BJ (cell line): ENCODE measurements at regions of chr6 and their contacts with region 1.

Region 1: DNA sequence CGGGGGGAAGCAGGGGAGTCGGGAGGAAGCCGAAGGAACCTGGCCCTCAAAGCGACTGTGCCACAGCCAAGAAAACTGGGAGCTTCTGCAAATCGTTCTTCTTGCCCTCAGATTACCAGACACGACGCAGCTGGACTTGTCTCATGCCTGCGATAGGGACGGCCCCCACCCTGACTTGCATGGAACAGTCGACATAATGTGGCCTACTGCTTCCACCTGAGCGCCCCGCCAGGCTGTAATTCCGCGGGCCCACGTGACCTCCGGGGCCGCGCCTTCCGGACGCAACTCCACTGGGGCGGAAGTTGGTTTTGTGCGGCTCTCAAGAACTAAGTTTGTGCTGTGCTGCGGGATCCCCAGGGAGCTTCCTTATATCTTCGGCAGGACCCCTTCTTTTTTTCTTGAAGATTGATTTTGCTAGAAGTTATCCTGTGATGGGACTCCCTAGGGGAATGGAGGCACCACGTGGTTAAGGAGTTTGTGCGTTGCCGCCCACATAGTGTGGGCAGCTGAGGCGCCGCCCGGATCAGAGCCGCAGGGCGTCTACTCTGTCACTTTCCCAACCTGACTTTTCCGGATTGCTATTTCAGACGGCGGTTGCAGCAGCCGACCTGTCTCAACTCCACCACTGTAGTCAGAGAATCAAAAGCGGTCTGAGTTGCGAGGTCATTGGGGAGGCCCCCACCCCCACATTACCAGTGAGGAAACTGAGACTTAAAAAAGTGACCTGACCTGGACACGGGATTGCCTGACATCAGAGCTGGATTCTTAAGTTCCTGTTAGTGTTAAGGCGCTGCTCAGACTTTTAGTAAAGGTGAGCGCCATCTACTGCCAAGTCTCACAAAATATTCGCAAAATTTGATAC is 540 bp upstream of the CD164 start:
- DNase-seq: peak; percentile 65
- H3K4me3 ChIP-seq: peak overlapping the region; percentile 99
- H3K27me3 ChIP-seq: no peaks in the 10 kb centered on the region; the same call in 1 of the 2 replicates
- CTCF ChIP-seq: peak; percentile 62

Region 2: DNA sequence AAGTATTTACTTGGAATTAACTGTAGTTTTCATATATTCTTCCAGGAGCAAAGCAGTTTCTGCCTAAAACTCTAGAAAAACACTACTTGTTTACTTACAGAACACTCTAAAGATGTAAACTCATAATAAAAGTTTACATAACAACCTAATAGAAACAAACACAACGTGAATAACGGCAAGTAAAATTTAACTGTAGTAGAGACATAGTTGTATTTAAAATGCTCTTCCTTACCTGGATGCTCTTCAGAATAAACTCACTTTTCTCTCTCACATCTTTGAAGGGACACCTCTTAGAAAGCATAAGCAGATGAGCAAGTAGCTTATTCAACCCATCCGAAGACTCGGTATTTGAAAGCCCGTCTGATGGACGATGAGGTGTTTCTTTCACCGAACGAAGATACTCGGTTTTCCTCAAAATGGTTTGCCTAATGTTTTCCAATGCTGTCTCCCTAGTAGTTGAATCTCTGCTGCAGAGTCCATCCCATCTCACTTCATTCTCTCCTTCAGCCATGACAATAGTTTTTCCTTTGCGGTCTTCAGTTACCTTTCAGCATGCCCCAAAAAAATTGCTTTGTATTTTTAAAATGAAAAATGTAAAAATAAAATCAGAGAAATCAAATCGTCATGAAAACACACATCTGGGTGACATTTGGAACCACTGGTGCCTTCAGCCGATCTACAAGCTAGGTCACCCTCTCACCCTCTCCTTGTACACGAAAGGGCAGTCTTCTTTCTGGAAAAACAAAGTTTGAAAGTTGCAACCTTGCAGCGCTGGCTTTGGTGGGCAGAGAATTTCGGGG is 289.0 kb before region 1 on chr6:
- CTCF ChIA-PET with region 1: interaction called, 3 read pairs
- POLR2A ChIA-PET with region 1: interaction called, 16 read pairs
- DNase-seq: no peak
- H3K4me3 ChIP-seq: peak overlapping the region; percentile 84
- H3K27me3 ChIP-seq: no peaks in the 10 kb centered on the region
- CTCF ChIP-seq: no peak

Region 3: GRCh38 chr6:109187399-109188114 is 195.2 kb before region 1 on chr6:
- CTCF ChIA-PET with region 1: interaction called, 84 read pairs
- POLR2A ChIA-PET with region 1: no interaction called
- DNase-seq: no peak
- H3K4me3 ChIP-seq: no peak overlapping the region
- H3K27me3 ChIP-seq: peaks cover 12% of the 10 kb centered on the region
- CTCF ChIP-seq: peak; percentile 95

Region 4: DNA sequence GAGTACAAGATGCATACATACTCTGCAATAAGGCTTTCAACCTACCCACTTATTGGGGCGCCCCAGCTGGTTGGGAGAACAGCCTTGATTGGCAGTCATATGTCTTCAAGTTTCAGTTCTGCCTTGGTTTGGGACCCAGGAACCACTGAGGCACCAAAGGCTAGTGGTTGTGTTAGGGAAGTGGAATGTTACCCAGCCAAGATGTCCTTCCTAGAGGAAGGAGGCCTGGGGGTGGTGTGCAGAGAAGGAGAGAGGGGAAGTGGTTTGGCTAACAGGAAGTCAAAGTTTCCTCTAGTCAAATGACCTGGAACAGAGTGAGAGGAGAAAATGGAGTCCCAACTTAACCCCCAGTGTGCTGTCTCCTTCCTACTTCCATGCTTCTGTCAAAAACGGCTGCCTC is 60.0 kb before region 1 on chr6:
- CTCF ChIA-PET with region 1: no interaction called
- POLR2A ChIA-PET with region 1: no interaction called
- DNase-seq: no peak
- H3K4me3 ChIP-seq: no peak overlapping the region
- H3K27me3 ChIP-seq: peaks cover 1% of the 10 kb centered on the region; the same call in 1 of the 2 replicates
- CTCF ChIP-seq: no peak

Region 5: DNA sequence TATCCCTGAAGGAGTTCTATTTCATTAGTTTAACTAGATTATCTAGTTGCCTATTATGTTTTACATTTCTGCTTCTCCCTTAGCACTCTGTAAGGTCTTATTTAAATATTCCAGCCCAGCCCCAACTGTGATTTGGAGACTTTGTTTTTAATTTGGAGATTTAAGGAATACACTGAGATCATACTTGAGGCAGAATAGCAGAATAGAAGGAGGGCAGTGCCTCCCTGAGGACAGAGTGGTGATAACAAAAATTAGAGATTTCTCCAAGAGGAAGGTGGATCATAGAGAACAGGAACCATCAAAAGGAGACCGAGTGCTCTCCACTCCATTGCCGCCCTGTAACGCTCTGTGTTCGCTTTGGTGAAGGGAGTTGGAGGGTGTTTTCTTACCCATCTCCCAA is 14.2 kb after region 1 on chr6:
- CTCF ChIA-PET with region 1: interaction called, 27 read pairs
- POLR2A ChIA-PET with region 1: interaction called, 4 read pairs
- DNase-seq: no peak
- H3K4me3 ChIP-seq: no peak overlapping the region
- H3K27me3 ChIP-seq: 0 out of 2 replicates have a peak, but pooled peaks cover 1% of the 10 kb centered on the region
- CTCF ChIP-seq: peak; percentile 44